ENCODE measurements at regions of chr3 and their contacts with region 1.

Region 1: GRCh38 chr3:79086514-79086913 is 681.3 kb downstream of the ROBO1 start:
- DNase-seq: peak in 1 of 3 donors; percentile 66
- ATAC-seq: peak; percentile 57
- H3K4me3 ChIP-seq: no peak overlapping the region
- H3K4me1 ChIP-seq: no peaks in the 10 kb centered on the region
- CTCF ChIP-seq: peak; percentile 41

Region 2: DNA sequence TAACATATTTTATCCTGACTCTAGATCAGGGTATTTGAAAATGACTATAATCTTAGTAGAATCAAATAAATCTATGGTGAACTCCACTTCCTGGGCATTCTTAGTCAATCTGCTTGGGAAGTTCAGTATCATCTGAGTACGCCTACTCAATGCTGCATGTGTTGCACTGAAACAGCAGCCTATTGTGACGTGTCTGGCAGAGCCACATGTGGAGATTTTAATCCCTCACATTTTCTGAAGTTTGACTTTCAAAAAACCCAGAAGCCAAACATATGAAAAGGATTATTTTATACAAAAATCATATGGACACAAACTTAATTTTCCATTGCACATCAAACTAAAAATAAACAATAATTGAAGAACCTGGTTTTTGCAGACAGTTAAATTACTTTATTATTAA is 117.0 kb before region 1 on chr3:
- intact Hi-C with region 1: no loop called
- DNase-seq: no peak
- ATAC-seq: no peak
- H3K4me3 ChIP-seq: no peak overlapping the region
- H3K4me1 ChIP-seq: no peaks in the 10 kb centered on the region
- CTCF ChIP-seq: no peak

Region 3: DNA sequence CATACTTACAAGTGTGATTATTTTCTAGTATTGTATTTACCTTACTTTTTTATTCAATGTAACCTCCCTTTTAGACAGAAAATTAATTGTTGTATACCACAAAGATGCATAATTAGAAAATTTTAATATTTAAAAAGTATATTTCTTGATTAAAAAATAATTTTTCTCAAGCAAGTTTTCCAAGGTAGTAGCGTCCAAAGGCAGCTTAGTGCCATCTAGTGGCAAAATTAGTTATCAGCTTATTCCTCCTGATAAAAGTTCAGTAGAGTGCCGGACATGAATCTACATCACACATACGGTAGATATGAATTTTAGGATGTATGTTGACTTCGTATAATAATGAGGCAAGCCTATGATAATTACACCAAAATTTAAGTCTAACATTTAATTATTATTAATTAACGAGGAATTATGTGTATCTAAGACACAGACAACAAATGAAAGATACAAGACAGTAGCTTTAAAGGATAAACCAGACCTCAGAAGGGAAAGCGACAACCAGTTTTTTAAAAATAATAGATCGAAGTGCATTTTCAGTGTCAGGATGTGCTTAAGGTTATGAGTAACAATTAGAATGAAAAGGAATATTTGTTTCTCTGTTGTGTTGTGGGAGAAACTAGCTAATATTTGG is 275.3 kb after region 1 on chr3:
- intact Hi-C with region 1: loop called (anchors 10 kb)
- DNase-seq: peak in 1 of 3 donors; percentile 21
- ATAC-seq: peak; percentile 51
- H3K4me3 ChIP-seq: no peak overlapping the region
- H3K4me1 ChIP-seq: no peaks in the 10 kb centered on the region
- CTCF ChIP-seq: no peak